B cell (primary cell): ENCODE measurements at regions of chr6 and their contacts with region 1.

Region 1: DNA sequence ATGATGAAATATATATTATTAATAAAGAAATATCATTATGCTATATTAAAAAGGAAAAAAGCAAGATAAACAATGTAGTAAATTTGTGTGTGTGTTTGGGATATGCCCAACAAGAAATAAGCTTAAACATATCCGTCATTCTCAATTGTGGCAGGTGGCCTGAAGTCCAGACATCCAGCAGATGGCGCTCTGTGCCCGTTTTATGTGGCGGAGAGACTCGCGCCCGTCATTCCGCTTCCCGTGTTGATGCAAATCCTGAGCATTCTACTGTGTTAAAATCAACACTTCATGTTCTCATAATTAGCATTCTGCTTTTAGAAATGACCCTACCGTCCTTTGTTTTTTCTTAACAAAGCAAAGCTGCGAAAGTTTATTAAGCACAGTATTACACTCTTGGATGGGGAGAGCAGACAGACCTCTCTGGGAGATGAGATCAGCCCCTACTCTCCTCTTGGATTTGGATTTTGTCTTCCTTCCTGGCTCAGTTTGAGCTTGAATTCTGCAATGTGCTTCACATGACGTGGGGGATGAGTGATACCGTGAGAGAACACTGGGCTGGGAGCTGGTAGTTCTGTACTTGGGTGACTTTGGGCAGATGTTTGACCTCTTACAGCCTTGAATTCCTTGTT is 125.8 kb downstream of the MCHR2 start:
- DNase-seq: peak; percentile 52
- ATAC-seq: no peak
- H3K4me3 ChIP-seq: no peak overlapping the region
- H3K4me3 Mint-ChIP-seq: no peak overlapping the region
- H3K27ac ChIP-seq: no peak overlapping the region
- H3K27ac Mint-ChIP-seq: no peak overlapping the region
- H3K4me1 ChIP-seq: peaks cover 0 to 3% of the 10 kb centered on the region in 2 donors
- H3K4me1 Mint-ChIP-seq: peaks cover 4% of the 10 kb centered on the region
- H3K27me3 ChIP-seq: peaks cover 0 to 16% (median 3%) of the 10 kb centered on the region in 4 experiments
- H3K27me3 Mint-ChIP-seq: peaks cover 25% of the 10 kb centered on the region
- CTCF ChIP-seq: peak; percentile 81

Region 2: GRCh38 chr6:100479179-100480035 is 611.2 kb after region 1 on chr6:
- CTCF ChIA-PET with region 1: interaction called, 4 read pairs
- POLR2A ChIA-PET with region 1: no interaction called
- intact Hi-C with region 1: loop called (anchors 2 kb)
- DNase-seq: peak; percentile 31
- ATAC-seq: no peak
- H3K4me3 ChIP-seq: no peak overlapping the region
- H3K4me3 Mint-ChIP-seq: no peak overlapping the region
- H3K27ac ChIP-seq: no peak overlapping the region
- H3K27ac Mint-ChIP-seq: no peak overlapping the region
- H3K4me1 ChIP-seq: no peaks in the 10 kb centered on the region
- H3K4me1 Mint-ChIP-seq: no peaks in the 10 kb centered on the region
- H3K27me3 ChIP-seq: peaks cover 0 to 7% (median 1%) of the 10 kb centered on the region in 4 experiments
- H3K27me3 Mint-ChIP-seq: peaks cover 25% of the 10 kb centered on the region
- CTCF ChIP-seq: peak; percentile 59